ENCODE measurements at regions of chr15 and their contacts with region 1.

Region 1: DNA sequence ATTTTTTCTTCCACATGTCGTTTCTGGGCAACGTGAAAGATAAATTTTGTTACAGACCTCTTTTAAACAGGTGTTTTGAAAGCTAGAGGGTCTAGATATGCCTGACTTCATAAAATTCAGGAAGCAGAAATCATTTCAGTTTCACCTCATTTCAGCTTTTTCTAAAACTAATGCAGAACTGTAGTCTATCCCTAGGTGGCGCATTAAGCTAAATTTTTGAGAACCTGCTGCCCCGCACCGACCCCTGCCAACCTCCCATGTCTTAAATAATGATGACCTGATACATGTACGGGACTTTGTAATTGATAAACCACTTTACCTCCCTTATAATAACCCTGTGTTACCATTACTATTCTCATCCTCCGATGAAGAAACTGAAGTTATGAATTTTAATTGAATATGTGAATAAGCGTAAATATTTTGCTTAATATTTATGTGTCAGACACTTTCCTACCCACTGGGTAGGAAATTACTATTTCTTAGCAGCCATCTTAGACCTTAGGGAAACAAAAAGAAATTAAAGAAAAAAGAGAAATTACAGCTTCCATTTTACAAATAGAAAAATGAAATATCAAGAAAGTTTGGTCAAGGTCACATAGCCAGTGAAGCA is 78.7 kb upstream of the GCNT3 start:
- DNase-seq: peak; percentile 25
- ATAC-seq: peak in 1 of 2 donors; percentile 26

Region 2: DNA sequence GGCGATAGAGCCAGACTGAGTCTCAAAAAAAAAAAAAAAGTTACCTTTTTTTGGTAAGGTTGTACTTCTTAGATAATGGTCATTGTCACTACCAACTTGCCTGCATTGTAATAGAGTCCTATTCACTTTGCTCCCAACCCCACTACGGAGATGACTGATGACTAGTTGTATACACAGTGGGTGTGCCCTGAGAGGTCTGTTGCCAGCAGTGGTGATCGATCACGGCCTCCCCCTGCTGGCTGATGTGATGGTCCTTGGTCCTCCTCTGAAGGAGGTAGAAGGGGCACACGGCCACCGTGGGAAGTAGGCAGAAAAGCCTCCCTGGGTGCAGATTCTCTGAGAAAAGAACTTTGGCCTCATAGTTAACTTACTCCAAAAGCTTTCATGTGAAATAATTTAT is 89.4 kb after region 1 on chr15:
- intact Hi-C with region 1: loop called in 1 of 2 experiments (anchors 5 kb)
- DNase-seq: peak; percentile 44
- ATAC-seq: peak in 1 of 2 donors; percentile 44

Measured in left cardiac atrium (tissue), 4 donors.